IMR-90 (cell line): ENCODE measurements at regions of chr9 and their contacts with region 1.

Region 1: DNA sequence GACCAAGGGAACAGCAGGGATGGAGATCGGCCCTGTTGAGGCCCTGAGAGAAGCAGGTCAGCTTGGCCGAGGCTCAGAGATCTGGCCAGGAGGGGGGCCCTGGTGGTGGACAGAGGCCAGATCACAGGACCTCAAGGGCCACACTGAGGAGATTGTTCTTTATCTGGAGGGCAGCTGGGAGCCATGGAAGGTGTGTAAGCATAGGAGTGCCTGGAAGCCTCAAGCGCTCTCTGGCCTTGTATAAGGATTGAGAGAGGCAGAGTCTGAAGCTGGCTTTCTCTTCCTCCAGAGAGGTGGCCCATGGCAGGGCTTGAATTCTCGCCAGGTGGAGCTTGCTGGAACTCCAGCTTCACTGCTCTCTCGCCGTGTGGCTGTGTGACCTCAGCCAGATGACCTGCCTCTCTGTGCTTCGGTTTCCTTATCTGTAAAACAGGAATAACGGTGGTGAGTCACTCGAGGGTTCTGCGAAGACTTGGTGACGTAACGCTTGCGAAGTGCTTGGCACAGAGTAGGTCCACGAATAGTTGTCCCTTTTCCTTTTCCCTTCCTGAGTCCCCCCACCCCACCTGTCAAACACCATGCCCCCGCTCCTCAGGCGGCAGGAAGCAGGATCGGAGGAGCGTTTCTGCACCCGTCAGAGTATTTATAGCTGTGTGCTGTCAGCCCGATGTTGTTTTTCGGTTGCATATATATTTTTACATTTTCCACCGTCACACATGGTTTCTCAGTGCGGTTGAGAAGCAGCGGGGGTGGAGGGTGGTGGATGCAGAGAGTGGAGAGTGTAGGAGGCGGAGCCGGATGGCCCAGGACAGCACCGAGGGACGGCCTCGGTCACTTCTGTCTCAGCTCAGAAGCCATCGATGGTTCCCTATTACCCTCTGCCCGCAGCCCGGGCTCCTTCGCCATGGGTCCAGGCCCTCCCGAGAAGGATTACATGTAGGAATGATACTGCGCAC is 17.0 kb upstream of the CRB2 start:
- DNase-seq: no peak
- ATAC-seq: no peak
- H3K4me3 ChIP-seq: no peak overlapping the region
- H3K27ac ChIP-seq: no peak overlapping the region
- H3K4me1 ChIP-seq: peaks cover 4% of the 10 kb centered on the region; the same call in 1 of the 2 replicates
- H3K27me3 ChIP-seq: peaks cover 6% of the 10 kb centered on the region
- CTCF ChIP-seq: no peak
- POLR2A ChIP-seq: no peak
- RAD21 ChIP-seq: no peak

Region 2: GRCh38 chr9:123268240-123268949 is 70.6 kb before region 1 on chr9 and contains the start of gene STRBP:
- CTCF ChIA-PET with region 1: no interaction called
- POLR2A ChIA-PET with region 1: no interaction called
- dilution Hi-C with region 1: no loop called
- in situ Hi-C with region 1: no loop called
- intact Hi-C with region 1: loop called (anchors 5 kb)
- DNase-seq: peak; percentile 61
- ATAC-seq: peak; percentile 98
- H3K4me3 ChIP-seq: peak within 1 kb of the TSS; percentile 100
- H3K27ac ChIP-seq: no peak within 1 kb of the TSS
- H3K4me1 ChIP-seq: peaks cover 4% of the 10 kb centered on the region; the same call in 1 of the 2 replicates
- H3K27me3 ChIP-seq: peaks cover 41% of the 10 kb centered on the region
- CTCF ChIP-seq: 0 out of 2 replicates have a peak, but pooled peaks have one; percentile 9
- POLR2A ChIP-seq: no peak
- RAD21 ChIP-seq: no peak
- total RNA-seq, gene STRBP: 2.5 and 3.9 TPM in 2 replicates

Region 3: GRCh38 chr9:123584202-123585184 is 245.5 kb after region 1 on chr9:
- CTCF ChIA-PET with region 1: no interaction called
- POLR2A ChIA-PET with region 1: no interaction called
- dilution Hi-C with region 1: no loop called
- in situ Hi-C with region 1: no loop called
- intact Hi-C with region 1: no loop called
- DNase-seq: no peak
- ATAC-seq: no peak
- H3K4me3 ChIP-seq: no peak overlapping the region
- H3K27ac ChIP-seq: no peak overlapping the region
- H3K4me1 ChIP-seq: no peaks in the 10 kb centered on the region
- H3K27me3 ChIP-seq: no peaks in the 10 kb centered on the region
- CTCF ChIP-seq: no peak
- POLR2A ChIP-seq: no peak
- RAD21 ChIP-seq: no peak